ENCODE measurements at regions of chr5 and their contacts with region 1.

Region 1: GRCh38 chr5:135332519-135333150 is 66.4 kb downstream of the MACROH2A1 start:
- DNase-seq: peak in 6 of 9 donors; percentile 14 to 52 (median 46)
- ATAC-seq: no peak
- H3K4me3 ChIP-seq: no peak overlapping the region
- H3K4me3 Mint-ChIP-seq: no peak overlapping the region
- H3K27ac ChIP-seq: no peak overlapping the region
- H3K27ac Mint-ChIP-seq: no peak overlapping the region
- H3K4me1 ChIP-seq: no peaks in the 10 kb centered on the region
- H3K4me1 Mint-ChIP-seq: peaks cover 0 to 27% (median 0%) of the 10 kb centered on the region in 7 donors
- H3K27me3 ChIP-seq: no peaks in the 10 kb centered on the region
- H3K27me3 Mint-ChIP-seq: no peaks in the 10 kb centered on the region

Region 2: DNA sequence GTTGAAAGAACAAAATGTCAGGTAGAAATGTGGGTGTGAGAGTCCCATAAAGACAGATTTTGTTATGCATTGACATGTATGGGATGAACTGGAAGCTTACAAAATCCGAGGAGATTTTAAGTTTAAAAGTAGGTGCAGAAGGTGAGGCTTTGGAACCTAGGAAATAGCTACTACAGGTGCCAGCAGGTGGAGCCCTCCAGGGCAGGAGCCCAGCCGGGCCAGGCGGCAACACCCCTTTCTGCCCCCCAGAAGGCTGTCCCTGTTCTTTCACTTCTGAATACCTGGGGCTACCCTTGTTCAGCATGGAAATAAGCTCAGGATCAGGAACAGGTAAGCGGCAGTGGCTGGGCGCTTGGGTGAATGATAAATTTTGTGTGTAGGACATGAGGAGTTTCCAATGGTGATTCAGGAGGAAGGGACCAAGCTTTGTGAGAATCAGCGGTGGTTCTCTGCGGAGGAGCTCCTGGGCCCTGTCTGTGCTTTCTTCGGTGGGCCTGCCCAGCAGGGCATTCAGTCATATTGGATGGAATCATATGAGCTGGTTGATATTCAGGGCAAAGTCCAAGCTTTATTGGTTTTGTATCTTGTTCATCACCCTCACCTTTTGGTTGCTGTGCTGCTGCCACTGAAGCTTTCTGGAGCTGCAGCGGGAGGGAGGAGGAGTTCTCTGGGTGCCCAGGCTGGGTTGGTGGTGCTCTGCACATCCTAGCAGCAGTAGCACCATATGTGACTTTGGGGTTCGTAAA is 415.4 kb before region 1 on chr5:
- CTCF ChIA-PET with region 1: interaction called, 5 read pairs
- POLR2A ChIA-PET with region 1: no interaction called
- intact Hi-C with region 1: loop called in 1 of 2 experiments (anchors 5 kb)
- DNase-seq: no peak
- ATAC-seq: no peak
- H3K4me3 ChIP-seq: no peak overlapping the region
- H3K4me3 Mint-ChIP-seq: no peak overlapping the region
- H3K27ac ChIP-seq: no peak overlapping the region
- H3K27ac Mint-ChIP-seq: peak overlapping the region in 1 of 9 donors; percentile 9
- H3K4me1 ChIP-seq: no peaks in the 10 kb centered on the region
- H3K4me1 Mint-ChIP-seq: peaks cover 6 to 26% (median 10%) of the 10 kb centered on the region in 7 donors
- H3K27me3 ChIP-seq: no peaks in the 10 kb centered on the region
- H3K27me3 Mint-ChIP-seq: no peaks in the 10 kb centered on the region

Region 3: DNA sequence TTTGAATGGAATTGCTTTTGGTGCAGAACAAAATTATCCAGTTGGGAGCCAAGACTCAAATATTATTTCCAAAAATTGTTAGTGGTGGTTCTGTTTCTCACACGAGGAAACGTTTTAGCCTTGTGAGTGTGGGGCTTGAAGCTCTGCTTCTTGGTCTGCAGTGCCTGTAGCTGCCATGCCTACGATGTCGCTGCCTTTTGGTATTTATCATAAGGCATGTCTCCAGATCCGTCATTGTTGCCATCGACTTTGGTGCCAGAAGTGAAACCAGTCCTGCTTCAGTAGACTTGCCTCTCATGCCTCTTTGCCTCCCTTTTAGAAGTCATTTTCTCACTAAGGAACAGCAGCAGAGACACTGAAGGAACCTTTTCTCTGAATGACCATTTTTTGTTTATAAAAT is 394.6 kb before region 1 on chr5:
- CTCF ChIA-PET with region 1: no interaction called
- POLR2A ChIA-PET with region 1: no interaction called
- intact Hi-C with region 1: loop called in 1 of 2 experiments (anchors 2 kb)
- DNase-seq: no peak
- ATAC-seq: no peak
- H3K4me3 ChIP-seq: no peak overlapping the region
- H3K4me3 Mint-ChIP-seq: no peak overlapping the region
- H3K27ac ChIP-seq: no peak overlapping the region
- H3K27ac Mint-ChIP-seq: no peak overlapping the region
- H3K4me1 ChIP-seq: no peaks in the 10 kb centered on the region
- H3K4me1 Mint-ChIP-seq: no peaks in the 10 kb centered on the region
- H3K27me3 ChIP-seq: no peaks in the 10 kb centered on the region
- H3K27me3 Mint-ChIP-seq: no peaks in the 10 kb centered on the region

Region 4: DNA sequence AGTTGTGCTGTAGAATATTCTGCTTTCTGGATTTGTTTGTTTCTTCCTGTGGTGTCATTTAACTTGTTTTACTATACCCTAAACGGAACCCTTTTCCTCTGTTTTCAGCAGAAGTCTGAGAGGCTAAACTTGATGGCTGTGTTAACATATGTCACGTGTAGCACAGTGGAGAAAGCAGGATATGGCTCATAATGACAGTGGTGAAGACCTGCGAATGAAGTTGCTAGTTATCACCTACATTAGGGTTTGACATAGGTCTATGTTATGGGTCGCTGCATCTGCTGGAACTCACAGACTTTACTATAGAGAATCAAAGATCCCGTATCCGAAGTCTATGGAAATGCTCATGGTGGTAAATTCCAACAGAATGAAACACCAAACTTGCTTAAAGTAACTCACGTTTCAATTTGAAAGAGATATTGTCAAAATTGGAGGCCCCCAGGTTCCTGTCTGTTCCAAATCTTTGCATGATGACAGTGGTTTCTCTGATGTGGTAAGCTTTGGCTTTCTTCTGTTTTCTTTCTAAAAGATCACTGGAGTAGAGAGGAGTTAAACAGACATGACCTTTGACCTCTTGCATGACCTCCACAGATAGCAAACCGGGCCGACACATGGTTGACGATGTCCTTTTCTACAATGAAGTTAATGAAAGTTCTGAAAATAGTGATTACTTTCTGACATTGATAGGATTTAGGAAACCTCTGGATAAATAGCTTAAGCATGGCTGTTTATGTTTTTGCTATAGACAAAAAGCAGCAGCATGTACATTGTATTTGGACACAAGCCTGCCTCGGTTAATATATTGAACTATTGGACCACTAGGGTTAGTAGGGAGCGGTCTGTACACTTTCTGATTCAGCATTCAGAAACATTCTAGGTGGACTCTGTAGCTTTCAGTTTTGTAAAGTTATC is 368.0 kb before region 1 on chr5:
- CTCF ChIA-PET with region 1: no interaction called
- POLR2A ChIA-PET with region 1: no interaction called
- intact Hi-C with region 1: loop called in 1 of 2 experiments (anchors 1 kb)
- DNase-seq: peak in 7 of 9 donors; percentile 68 to 84 (median 79)
- ATAC-seq: peak; percentile 86
- H3K4me3 ChIP-seq: no peak overlapping the region
- H3K4me3 Mint-ChIP-seq: peak overlapping the region in 9 of 10 donors; percentile 37 to 78 (median 67)
- H3K27ac ChIP-seq: peak overlapping the region; percentile 42
- H3K27ac Mint-ChIP-seq: peak overlapping the region; percentile 85 to 95 (median 94)
- H3K4me1 ChIP-seq: peaks cover 0 to 28% of the 10 kb centered on the region in 2 donors
- H3K4me1 Mint-ChIP-seq: peaks cover 13 to 39% (median 28%) of the 10 kb centered on the region in 7 donors
- H3K27me3 ChIP-seq: no peaks in the 10 kb centered on the region
- H3K27me3 Mint-ChIP-seq: no peaks in the 10 kb centered on the region

Region 5: GRCh38 chr5:135208903-135209721 is 123.5 kb before region 1 on chr5:
- CTCF ChIA-PET with region 1: no interaction called
- POLR2A ChIA-PET with region 1: no interaction called
- intact Hi-C with region 1: no loop called
- DNase-seq: no peak
- ATAC-seq: no peak
- H3K4me3 ChIP-seq: no peak overlapping the region
- H3K4me3 Mint-ChIP-seq: no peak overlapping the region
- H3K27ac ChIP-seq: no peak overlapping the region
- H3K27ac Mint-ChIP-seq: no peak overlapping the region
- H3K4me1 ChIP-seq: no peaks in the 10 kb centered on the region
- H3K4me1 Mint-ChIP-seq: peaks cover 0 to 1% (median 0%) of the 10 kb centered on the region in 7 donors
- H3K27me3 ChIP-seq: no peaks in the 10 kb centered on the region
- H3K27me3 Mint-ChIP-seq: peaks cover 11 to 29% (median 15%) of the 10 kb centered on the region in 5 donors